PC-9 (cell line): ENCODE measurements at regions of chr2 and their contacts with region 1.

Region 1: DNA sequence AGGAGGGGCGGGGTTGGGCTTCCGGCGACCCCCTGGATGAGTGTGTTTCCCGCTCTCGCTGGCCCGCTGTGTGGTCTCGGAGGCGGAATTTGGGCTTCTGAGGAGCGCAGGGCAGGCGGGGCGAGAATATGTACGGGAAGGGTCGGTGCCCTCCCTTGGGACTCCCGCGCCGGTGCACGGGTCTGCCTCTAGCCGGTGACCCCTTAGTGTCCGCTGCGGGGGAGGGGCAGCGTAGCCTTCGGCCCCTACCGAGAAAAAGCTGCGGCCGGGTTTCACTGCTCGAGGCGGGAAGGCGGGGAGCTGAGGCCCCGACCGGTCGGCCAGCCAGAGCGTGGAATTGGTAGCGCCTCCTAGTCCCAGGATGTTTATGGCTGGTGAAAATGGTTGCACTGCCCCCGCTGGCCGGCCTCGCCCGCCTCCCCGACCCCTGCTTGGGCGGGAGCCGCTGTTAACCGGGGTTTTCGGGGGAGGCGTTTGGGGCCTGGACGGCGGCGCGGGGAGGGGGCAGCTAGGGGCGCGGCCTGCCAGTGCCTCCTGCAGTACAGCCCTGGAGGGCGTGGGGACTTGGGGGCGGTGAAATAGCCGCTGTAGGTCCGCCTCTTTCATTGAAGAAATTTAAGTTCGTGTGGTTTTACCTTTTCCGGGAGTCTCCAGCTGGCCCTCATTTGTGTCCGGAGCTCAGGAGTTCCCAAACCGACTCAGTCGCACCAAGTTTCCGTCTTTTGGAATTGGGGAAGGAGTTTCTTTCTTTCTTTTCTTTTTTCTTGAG is at the start of gene UGP2:
- DNase-seq: peak; percentile 92 to 96
- H3K4me3 ChIP-seq: peak within 1 kb of the TSS; percentile 90
- H3K27ac ChIP-seq: peak within 1 kb of the TSS; percentile 85
- H3K4me1 ChIP-seq: peaks cover 35% of the 10 kb centered on the region
- H3K27me3 ChIP-seq: no peaks in the 10 kb centered on the region
- CTCF ChIP-seq: 0 out of 2 replicates have a peak, but pooled peaks have one; percentile 37
- total RNA-seq, gene UGP2: 83.5 and 89.5 TPM in 2 replicates

Region 2: DNA sequence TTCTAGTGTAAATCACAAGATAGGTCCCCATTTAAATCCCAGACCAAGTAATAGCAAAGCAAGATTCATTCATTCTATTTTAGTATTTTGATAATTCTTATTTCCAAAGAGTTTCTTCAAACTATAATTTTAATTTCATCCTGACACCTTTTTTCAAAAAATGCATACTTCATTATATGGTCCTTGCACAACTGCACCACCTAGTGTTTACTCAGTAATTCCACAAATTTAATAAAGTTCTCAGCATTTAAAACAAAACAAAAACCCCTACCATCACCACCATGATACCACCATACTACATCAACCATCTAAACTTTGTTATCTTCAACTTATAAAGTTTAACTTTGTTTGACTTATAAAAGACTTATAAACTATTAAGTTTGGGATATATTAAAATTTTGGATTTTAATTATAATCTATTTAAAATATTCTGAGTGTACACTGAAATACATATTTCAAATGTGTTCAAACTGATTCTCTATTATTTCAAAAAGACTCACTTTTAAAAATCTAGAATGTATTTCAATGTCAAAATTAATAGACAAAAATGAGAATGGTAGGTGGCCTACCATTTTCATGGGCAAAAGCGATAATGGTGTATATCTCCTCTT is 297.3 kb before region 1 on chr2:
- CTCF ChIA-PET with region 1: no interaction called
- POLR2A ChIA-PET with region 1: no interaction called
- intact Hi-C with region 1: no loop called
- DNase-seq: no peak
- H3K4me3 ChIP-seq: no peak overlapping the region
- H3K27ac ChIP-seq: no peak overlapping the region
- H3K4me1 ChIP-seq: no peaks in the 10 kb centered on the region
- H3K27me3 ChIP-seq: no peaks in the 10 kb centered on the region
- CTCF ChIP-seq: peak; percentile 78

Region 3: DNA sequence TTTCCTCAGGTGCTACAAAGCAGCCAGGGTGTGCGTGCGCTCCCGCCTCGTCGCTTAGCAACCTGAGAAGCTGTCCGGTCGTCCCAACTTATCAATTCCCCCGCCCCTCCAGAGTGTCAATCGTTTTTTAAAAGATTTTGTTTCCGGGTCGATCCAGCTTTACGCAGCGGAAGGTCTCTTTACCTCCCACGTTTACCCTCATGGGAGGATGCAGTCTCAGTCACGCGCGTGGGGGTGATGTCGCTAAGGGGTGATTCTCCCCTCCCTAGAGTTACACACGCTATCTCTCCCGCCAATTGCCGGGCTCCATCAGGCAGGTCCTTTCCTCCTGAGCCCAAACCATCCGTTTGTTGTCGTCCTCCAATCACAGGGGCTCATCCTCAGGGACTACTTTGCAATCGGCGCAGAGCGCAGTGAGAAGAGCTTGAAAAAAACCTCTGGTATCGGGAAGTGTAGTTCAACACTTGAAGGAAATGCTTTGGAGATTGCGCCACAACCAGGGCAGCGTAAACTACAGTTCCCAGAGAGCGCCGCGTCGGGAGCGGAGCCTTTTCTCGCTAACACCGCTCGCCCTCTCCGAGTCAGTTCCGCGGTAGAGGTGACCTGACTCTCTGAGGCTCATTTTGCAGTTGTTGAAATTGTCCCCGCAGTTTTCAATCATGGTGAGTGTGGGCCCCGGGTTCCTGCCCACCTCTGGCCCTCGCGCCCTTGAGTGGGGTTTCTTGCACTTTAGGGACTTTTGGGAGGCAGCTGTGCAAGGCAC is 252.9 kb before region 1 on chr2 and contains the starts of genes MDH1 and WDPCP:
- CTCF ChIA-PET with region 1: interaction called, 3 read pairs
- POLR2A ChIA-PET with region 1: interaction called, 4 read pairs
- intact Hi-C with region 1: loop called (anchors 2 kb)
- DNase-seq: peak; percentile 94 to 100
- H3K4me3 ChIP-seq: peak within 1 kb of the TSS; percentile 63
- H3K27ac ChIP-seq: peak within 1 kb of the TSS; percentile 72
- H3K4me1 ChIP-seq: peaks cover 23% of the 10 kb centered on the region
- H3K27me3 ChIP-seq: no peaks in the 10 kb centered on the region
- CTCF ChIP-seq: no peak
- total RNA-seq, gene MDH1: 157 and 162 TPM in 2 replicates
- total RNA-seq, gene WDPCP: 15.2 and 15.5 TPM in 2 replicates

Region 4: DNA sequence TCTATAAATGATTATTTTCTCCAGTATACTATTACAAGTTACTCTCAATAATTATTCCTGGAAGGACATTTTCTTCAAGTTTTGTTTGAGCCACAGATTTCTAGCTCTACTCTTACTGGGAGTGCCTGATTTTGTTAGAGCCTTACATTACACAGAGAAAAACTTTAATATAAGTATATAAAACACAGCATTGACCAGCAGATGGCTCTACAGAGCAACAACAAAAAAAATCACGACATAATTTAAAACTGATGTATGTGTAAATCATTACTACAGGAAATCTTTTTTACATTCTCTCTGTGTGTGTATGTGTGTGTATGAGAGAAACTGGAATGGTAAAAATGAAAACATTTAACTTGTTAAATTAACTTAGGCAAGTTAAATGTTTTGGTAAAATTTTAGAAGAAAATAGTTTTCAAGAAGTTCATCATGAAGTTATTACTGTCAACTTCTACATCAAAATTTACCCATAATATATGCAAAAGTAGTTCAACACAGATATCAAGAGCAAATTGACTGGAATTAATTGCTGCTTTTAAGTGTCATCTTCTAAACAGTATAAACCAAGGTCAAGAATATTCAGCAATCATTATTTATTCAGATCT is 149.3 kb before region 1 on chr2:
- CTCF ChIA-PET with region 1: no interaction called
- POLR2A ChIA-PET with region 1: no interaction called
- intact Hi-C with region 1: loop called (anchors 1 kb)
- DNase-seq: peak; percentile 8 to 41
- H3K4me3 ChIP-seq: no peak overlapping the region
- H3K27ac ChIP-seq: no peak overlapping the region
- H3K4me1 ChIP-seq: peaks cover 9% of the 10 kb centered on the region; the same call in 1 of the 2 replicates
- H3K27me3 ChIP-seq: no peaks in the 10 kb centered on the region
- CTCF ChIP-seq: peak; percentile 85

Region 5: GRCh38 chr2:63741874-63742583 is 99.4 kb before region 1 on chr2:
- CTCF ChIA-PET with region 1: no interaction called
- POLR2A ChIA-PET with region 1: no interaction called
- intact Hi-C with region 1: loop called (anchors 1 kb)
- DNase-seq: peak in 1 of 2 experiments; percentile 69
- H3K4me3 ChIP-seq: no peak overlapping the region
- H3K27ac ChIP-seq: no peak overlapping the region
- H3K4me1 ChIP-seq: no peaks in the 10 kb centered on the region
- H3K27me3 ChIP-seq: no peaks in the 10 kb centered on the region
- CTCF ChIP-seq: no peak

Region 6: DNA sequence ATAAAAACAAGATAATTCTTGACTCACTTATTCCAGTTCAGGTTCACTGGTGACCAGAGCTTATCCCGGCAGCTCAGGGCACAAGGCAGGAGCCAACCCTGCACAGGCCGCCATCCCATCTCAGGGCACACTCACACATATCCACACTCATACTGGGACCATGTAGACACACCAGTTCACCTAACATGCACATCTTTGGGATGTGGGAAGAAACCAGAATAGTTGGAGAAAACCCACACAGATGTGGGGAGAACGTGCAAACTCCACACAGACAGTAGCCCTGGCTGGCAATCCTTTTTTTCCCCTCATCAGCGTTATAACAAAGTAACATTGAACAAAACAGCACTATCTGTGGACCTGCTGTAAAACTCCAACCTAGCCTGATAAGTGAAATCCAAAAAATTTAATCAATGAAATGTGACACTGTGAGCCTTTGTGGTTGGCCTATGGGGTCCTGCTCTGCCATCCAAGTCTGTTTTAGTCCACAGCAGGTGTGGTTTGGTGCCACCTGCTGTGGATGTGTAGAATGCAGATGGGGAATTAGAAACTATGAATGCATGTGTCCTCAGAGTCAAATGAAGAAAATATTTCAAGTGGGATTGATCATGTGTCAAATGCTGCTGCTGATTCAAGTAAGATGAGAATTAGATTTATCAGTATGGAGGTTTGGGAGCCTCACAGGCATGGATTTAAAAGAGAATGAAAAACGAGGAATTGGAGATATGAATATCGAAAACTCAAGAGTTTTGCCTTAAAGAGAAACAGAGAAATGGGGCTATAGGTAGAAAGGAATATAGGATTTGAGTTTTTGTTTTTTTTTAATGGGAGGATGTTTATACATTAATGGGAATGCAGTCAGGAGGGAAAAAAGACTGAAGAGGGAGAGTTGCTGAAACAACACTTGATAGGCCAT is 47.3 kb after region 1 on chr2:
- CTCF ChIA-PET with region 1: no interaction called
- POLR2A ChIA-PET with region 1: no interaction called
- intact Hi-C with region 1: loop called (anchors 2 kb)
- DNase-seq: peak in 1 of 2 experiments; percentile 51
- H3K4me3 ChIP-seq: no peak overlapping the region
- H3K27ac ChIP-seq: no peak overlapping the region
- H3K4me1 ChIP-seq: no peaks in the 10 kb centered on the region
- H3K27me3 ChIP-seq: no peaks in the 10 kb centered on the region
- CTCF ChIP-seq: peak; percentile 94